ENCODE measurements at regions of chr14 and their contacts with region 1.

Region 1: DNA sequence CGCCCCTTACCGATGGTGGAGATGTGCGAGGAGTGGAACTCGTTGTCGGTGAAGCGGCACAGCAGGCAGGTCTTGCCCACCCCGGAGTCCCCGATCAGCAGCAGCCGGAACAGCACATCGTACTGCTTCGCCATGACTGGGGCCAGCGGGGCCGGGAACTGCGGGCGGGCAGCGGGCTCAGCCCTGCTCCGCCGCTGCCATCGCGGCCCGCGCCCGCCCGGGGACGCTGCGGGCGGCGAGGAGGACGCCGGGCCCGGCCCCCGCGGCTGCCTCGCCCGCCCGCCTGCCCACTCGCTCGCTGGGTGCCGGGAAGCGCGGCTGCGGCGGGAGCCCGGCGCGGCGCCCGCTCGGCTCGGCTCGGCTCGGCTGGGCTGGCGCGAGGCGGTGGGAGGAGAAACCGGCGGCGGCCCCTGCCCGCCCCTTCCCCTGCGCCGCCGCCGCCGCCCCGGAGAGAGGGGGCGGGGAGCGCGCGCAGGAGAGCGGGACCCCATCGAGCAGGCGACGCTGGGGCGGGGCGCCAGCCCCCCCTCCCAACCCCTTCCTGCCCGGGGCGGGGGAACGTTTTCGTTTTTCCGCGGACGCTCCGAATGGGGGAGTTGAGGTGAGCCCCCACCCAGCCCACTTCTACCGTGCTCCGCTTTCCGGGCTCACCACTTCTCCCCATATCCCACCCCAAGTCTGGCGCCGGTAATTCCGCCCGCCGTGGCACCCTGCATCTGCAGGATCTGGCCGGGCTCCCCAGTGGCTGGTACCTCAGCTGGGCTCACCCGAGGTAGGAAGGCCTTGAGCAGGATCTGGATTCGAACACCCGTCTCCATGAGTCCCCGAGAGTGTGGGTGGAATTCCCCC is at the start of gene RAB15:
- DNase-seq: peak; percentile 31 to 64 (median 36)
- ATAC-seq: peak; percentile 15 to 81 (median 70)
- H3K4me3 ChIP-seq: peak within 1 kb of the TSS; percentile 60 to 89 (median 75)
- H3K27ac ChIP-seq: peak within 1 kb of the TSS in 3 of 12 donors; percentile 25 to 39 (median 28)
- H3K4me1 ChIP-seq: peaks cover 0 to 22% (median 9%) of the 10 kb centered on the region in 12 donors
- H3K27me3 ChIP-seq: no peaks in the 10 kb centered on the region
- CTCF ChIP-seq: peak in 1 of 12 donors; percentile 6
- POLR2A ChIP-seq: no peak
- total RNA-seq, gene RAB15: 15.2 to 70.4 (median 22.5) TPM

Region 2: GRCh38 chr14:64800000-64800399 is 172.2 kb before region 1 on chr14:
- intact Hi-C with region 1: loop called in 1 of 10 experiments (anchors 10 kb)
- DNase-seq: peak in 4 of 5 donors; percentile 41 to 67 (median 50)
- ATAC-seq: peak; percentile 44 to 72 (median 63)
- H3K4me3 ChIP-seq: no peak overlapping the region
- H3K27ac ChIP-seq: no peak overlapping the region
- H3K4me1 ChIP-seq: peaks cover 0 to 7% (median 0%) of the 10 kb centered on the region in 12 donors
- H3K27me3 ChIP-seq: no peaks in the 10 kb centered on the region
- CTCF ChIP-seq: peak; percentile 29 to 63 (median 50)
- POLR2A ChIP-seq: no peak

Region 3: GRCh38 chr14:64986578-64987571 is 14.7 kb after region 1 on chr14 and contains the start of gene FNTB:
- intact Hi-C with region 1: no loop called
- DNase-seq: peak; percentile 95 to 98 (median 98)
- ATAC-seq: peak; percentile 98 to 99 (median 99)
- H3K4me3 ChIP-seq: peak within 1 kb of the TSS; percentile 66 to 93 (median 80)
- H3K27ac ChIP-seq: peak within 1 kb of the TSS; percentile 60 to 94 (median 87)
- H3K4me1 ChIP-seq: peaks cover 0 to 41% (median 14%) of the 10 kb centered on the region in 12 donors
- H3K27me3 ChIP-seq: no peaks in the 10 kb centered on the region
- CTCF ChIP-seq: peak; percentile 56 to 97 (median 80)
- POLR2A ChIP-seq: peak in 1 of 2 donors; percentile 53
- total RNA-seq, gene FNTB: 13.0 to 20.8 (median 16.7) TPM